Activated naive CD8-positive, alpha-beta T cell treated with anti-CD3 and anti-CD28 coated beads, Interleukin-2, amount 10 ng/mL, durations not matched to agents 7 days and 5 days (primary cell): ENCODE measurements at regions of chr1 and their contacts with region 1.

Region 1: DNA sequence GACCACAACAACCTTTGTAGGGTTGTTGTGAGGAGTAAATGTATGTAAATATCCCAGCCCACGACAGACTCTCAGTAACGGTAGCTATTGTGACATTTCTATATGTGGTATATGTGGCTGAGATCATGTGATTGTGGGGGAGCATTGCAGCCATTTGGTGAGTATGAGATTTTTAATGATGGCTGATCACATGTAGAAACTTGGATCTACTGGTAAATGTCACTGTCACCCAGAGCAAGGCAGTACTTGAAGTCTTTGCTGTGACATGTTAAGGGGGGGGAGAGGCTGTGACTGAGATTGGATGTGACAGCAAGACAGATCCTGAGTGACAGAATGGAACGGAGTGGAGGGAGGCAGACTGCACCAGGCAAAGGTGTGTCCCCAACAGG is 23.9 kb upstream of the MEF2D start:
- DNase-seq: peak; percentile 42
- ATAC-seq: peak; percentile 72
- H3K4me3 Mint-ChIP-seq: peak overlapping the region; percentile 83
- H3K27ac Mint-ChIP-seq: peak overlapping the region; percentile 97
- H3K4me1 Mint-ChIP-seq: peaks cover 44% of the 10 kb centered on the region
- H3K27me3 Mint-ChIP-seq: no peaks in the 10 kb centered on the region

Region 2: DNA sequence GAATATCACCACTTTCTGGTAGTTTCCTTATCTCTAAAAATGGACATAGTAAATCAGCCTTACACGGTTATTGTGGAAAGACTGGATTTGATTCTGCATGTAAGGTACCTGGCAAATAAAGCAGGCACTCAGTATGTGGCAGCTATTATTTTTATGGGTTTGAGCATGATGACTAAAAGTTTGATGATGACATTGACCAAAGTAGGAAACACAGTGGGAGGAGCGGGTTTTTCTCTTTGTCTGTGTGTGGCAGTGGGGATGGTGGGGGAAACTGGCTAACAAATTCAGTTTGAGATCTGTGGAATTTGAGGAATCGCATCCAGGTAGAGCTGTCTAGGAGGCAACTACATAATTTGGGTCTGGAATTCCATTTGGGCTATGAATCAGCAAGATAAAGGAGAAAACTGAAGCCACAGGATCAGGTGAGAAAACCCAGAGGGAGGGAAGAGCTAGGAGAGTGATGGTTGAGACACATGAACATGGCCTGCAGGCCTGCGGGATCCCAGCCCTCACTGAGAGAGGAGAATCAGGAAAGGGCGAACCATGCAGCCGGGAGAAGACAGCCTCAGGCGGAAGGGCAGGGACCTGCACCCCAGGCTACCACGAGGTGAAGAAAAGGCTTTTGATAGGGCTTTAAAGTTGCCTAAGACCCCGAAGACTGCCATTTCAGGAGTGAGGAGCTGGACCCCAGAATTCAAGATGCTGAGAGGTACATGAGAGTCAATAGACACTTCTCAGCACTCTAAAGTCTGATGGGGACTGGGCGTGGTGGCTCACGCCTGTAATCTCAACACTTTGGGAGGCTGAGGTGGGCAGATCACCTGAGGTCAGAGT is 76.1 kb before region 1 on chr1:
- POLR2A ChIA-PET with region 1: no interaction called
- DNase-seq: no peak
- ATAC-seq: no peak
- H3K4me3 Mint-ChIP-seq: no peak overlapping the region
- H3K27ac Mint-ChIP-seq: no peak overlapping the region
- H3K4me1 Mint-ChIP-seq: peaks cover 7% of the 10 kb centered on the region
- H3K27me3 Mint-ChIP-seq: peaks cover 39% of the 10 kb centered on the region

Region 3: GRCh38 chr1:156508163-156508887 is 16.1 kb before region 1 on chr1:
- POLR2A ChIA-PET with region 1: interaction called, 28 read pairs
- DNase-seq: peak; percentile 50
- ATAC-seq: no peak
- H3K4me3 Mint-ChIP-seq: peak overlapping the region; percentile 85
- H3K27ac Mint-ChIP-seq: peak overlapping the region; percentile 91
- H3K4me1 Mint-ChIP-seq: peaks cover 52% of the 10 kb centered on the region
- H3K27me3 Mint-ChIP-seq: peaks cover 5% of the 10 kb centered on the region

Region 4: GRCh38 chr1:156781585-156782186 is 257.2 kb after region 1 on chr1:
- POLR2A ChIA-PET with region 1: no interaction called
- DNase-seq: no peak
- ATAC-seq: no peak
- H3K4me3 Mint-ChIP-seq: no peak overlapping the region
- H3K27ac Mint-ChIP-seq: no peak overlapping the region
- H3K4me1 Mint-ChIP-seq: peaks cover 27% of the 10 kb centered on the region
- H3K27me3 Mint-ChIP-seq: no peaks in the 10 kb centered on the region